GM12878 (cell line): ENCODE measurements at regions of chr13 and their contacts with region 1.

Region 1: GRCh38 chr13:45718063-45718462 is 15.9 kb downstream of the CBY2 start:
- DNase-seq: no peak
- ATAC-seq: peak; percentile 97
- H3K4me3 ChIP-seq: no peak overlapping the region
- H3K27ac ChIP-seq: peak overlapping the region; percentile 6; the same call in 1 of the 2 replicates
- H3K4me1 ChIP-seq: no peaks in the 10 kb centered on the region
- H3K27me3 ChIP-seq: no peaks in the 10 kb centered on the region
- CTCF ChIP-seq: peak; percentile 76 to 81 (median 80)
- EP300 ChIP-seq: no peak
- POLR2A ChIP-seq: no peak
- RAD21 ChIP-seq: peak; percentile 95

Region 2: GRCh38 chr13:44380404-44381165 is 1337.5 kb before region 1 on chr13:
- CTCF ChIA-PET with region 1: no interaction called
- POLR2A ChIA-PET with region 1: no interaction called
- RAD21 ChIA-PET with region 1: no interaction called
- SMC1A ChIA-PET with region 1: no interaction called
- in situ Hi-C with region 1: no loop called
- intact Hi-C with region 1: no loop called
- DNase-seq: no peak
- ATAC-seq: no peak
- H3K4me3 ChIP-seq: no peak overlapping the region
- H3K27ac ChIP-seq: no peak overlapping the region
- H3K4me1 ChIP-seq: no peaks in the 10 kb centered on the region
- H3K27me3 ChIP-seq: peaks cover 0 to under 1% of the 10 kb centered on the region in 2 experiments; a peak in 1 of 4 replicates
- CTCF ChIP-seq: no peak
- EP300 ChIP-seq: no peak
- POLR2A ChIP-seq: no peak
- RAD21 ChIP-seq: no peak

Region 3: DNA sequence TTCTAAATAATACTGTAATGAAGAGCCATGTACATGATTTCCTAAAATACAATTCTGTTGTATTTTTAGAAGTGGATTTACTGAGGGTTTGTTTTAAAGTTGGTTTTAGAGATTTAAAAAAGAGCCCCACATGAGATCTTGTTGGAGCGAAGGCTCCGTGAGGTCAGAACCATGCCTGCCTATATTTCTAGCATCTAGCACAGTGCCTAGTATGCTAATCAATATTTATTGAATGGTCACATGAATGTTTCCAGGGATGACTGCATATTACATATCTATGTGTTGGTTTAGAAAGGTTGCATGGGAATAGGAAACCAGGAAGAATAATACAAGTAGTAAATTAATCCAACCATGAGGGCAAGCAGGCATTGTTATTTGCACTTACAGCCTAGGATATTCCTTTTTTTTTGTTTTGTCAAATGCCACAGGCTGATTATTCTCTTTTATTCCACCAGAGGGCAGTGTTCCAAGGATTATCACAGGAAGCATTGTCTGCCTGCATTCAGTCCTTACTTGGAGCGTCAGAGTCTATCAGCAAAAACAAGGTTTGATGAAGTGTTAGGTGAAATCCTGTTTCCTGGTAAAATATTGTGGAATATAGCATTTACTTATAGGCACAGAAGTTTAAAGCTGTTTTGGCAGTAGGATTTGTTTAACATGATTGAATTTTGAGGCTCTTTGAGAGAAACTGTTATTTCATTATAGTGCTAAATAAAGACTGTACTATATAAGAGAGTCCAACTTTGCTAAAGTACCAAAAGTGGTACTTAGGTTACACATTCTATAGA is 206.6 kb before region 1 on chr13:
- CTCF ChIA-PET with region 1: interaction called, 12 read pairs
- POLR2A ChIA-PET with region 1: no interaction called
- RAD21 ChIA-PET with region 1: interaction called, 3 read pairs
- SMC1A ChIA-PET with region 1: interaction called, 5 read pairs
- in situ Hi-C with region 1: no loop called
- intact Hi-C with region 1: loop called (anchors 2 kb)
- DNase-seq: peak; percentile 24
- ATAC-seq: peak; percentile 85
- H3K4me3 ChIP-seq: no peak overlapping the region
- H3K27ac ChIP-seq: no peak overlapping the region
- H3K4me1 ChIP-seq: no peaks in the 10 kb centered on the region
- H3K27me3 ChIP-seq: no peaks in the 10 kb centered on the region
- CTCF ChIP-seq: peak; percentile 60 to 84 (median 67)
- EP300 ChIP-seq: no peak
- POLR2A ChIP-seq: no peak
- RAD21 ChIP-seq: peak; percentile 58

Region 4: GRCh38 chr13:45683701-45684100 is 34.4 kb before region 1 on chr13:
- CTCF ChIA-PET with region 1: interaction called, 13 read pairs
- POLR2A ChIA-PET with region 1: no interaction called
- RAD21 ChIA-PET with region 1: interaction called, 5 read pairs
- SMC1A ChIA-PET with region 1: interaction called, 11 read pairs
- in situ Hi-C with region 1: no loop called
- intact Hi-C with region 1: no loop called
- DNase-seq: no peak
- ATAC-seq: peak; percentile 63
- H3K4me3 ChIP-seq: no peak overlapping the region
- H3K27ac ChIP-seq: no peak overlapping the region
- H3K4me1 ChIP-seq: no peaks in the 10 kb centered on the region
- H3K27me3 ChIP-seq: no peaks in the 10 kb centered on the region
- CTCF ChIP-seq: peak; percentile 27 to 36 (median 31); a peak in 4 of 6 replicates
- EP300 ChIP-seq: no peak
- POLR2A ChIP-seq: no peak
- RAD21 ChIP-seq: no peak

Region 5: GRCh38 chr13:45695198-45695730 is 22.8 kb before region 1 on chr13:
- CTCF ChIA-PET with region 1: interaction called, 31 read pairs
- POLR2A ChIA-PET with region 1: no interaction called
- RAD21 ChIA-PET with region 1: interaction called, 24 read pairs
- SMC1A ChIA-PET with region 1: interaction called, 34 read pairs
- in situ Hi-C with region 1: no loop called
- intact Hi-C with region 1: no loop called
- DNase-seq: peak; percentile 68
- ATAC-seq: peak; percentile 66
- H3K4me3 ChIP-seq: peak overlapping the region; percentile 66
- H3K27ac ChIP-seq: peak overlapping the region; percentile 98
- H3K4me1 ChIP-seq: peaks cover 14% of the 10 kb centered on the region
- H3K27me3 ChIP-seq: no peaks in the 10 kb centered on the region
- CTCF ChIP-seq: no peak
- EP300 ChIP-seq: peak in 1 of 2 experiments; percentile 57; a peak in 1 of 4 replicates
- POLR2A ChIP-seq: 0 out of 2 replicates have a peak, but pooled peaks have one; percentile 23
- RAD21 ChIP-seq: no peak

Region 6: GRCh38 chr13:45700971-45701900 is 16.8 kb before region 1 on chr13:
- CTCF ChIA-PET with region 1: interaction called, 40 read pairs
- POLR2A ChIA-PET with region 1: interaction called, 3 read pairs
- RAD21 ChIA-PET with region 1: interaction called, 24 read pairs
- SMC1A ChIA-PET with region 1: interaction called, 34 read pairs
- in situ Hi-C with region 1: no loop called
- intact Hi-C with region 1: no loop called
- DNase-seq: peak; percentile 93
- ATAC-seq: peak; percentile 81
- H3K4me3 ChIP-seq: peak overlapping the region; percentile 88
- H3K27ac ChIP-seq: peak overlapping the region; percentile 98
- H3K4me1 ChIP-seq: peaks cover 46% of the 10 kb centered on the region
- H3K27me3 ChIP-seq: no peaks in the 10 kb centered on the region
- CTCF ChIP-seq: peak; percentile 53 to 86 (median 85)
- EP300 ChIP-seq: no peak; a peak in 1 of 4 replicates
- POLR2A ChIP-seq: peak; percentile 82
- RAD21 ChIP-seq: peak; percentile 47

Region 7: DNA sequence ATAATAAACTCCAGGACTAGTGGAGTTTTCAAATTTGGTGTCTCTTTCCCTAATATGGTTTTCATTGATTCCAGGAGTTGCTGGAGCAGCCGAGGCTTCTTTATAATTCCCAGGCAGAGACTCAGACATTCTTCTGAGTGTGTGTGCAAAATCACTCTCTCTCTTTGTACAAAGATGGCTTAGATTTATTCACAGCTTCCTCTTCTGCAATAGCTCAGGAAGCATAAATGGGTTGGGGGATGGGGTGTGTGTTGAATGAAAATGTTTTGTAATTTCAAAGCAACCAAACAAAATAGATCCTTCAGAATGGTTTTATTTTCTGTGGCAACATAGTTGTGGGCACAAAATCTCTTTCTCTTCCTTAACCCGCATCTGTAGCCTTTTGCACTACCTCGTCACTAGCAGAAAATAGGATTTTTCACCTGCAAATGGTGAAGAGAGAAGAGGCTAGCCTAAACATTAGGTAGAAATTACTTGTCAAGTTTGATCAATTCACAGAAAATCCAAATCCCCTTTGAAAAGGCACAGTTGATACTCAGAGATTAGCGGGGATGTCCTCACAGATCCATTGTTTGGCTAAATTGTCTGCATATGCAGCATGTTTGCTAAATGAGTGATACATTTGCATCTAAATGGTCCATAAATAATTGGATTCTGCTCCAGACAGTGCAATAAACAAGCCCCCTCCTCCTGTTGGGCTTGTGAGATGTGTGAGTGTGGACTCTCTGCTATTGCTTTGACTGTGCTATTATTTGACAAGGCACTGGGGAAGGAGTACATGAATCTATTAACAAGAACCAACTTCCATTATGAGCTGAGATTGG is 50.8 kb after region 1 on chr13:
- CTCF ChIA-PET with region 1: no interaction called
- POLR2A ChIA-PET with region 1: no interaction called
- RAD21 ChIA-PET with region 1: no interaction called
- SMC1A ChIA-PET with region 1: no interaction called
- in situ Hi-C with region 1: no loop called
- intact Hi-C with region 1: no loop called
- DNase-seq: no peak
- ATAC-seq: no peak
- H3K4me3 ChIP-seq: no peak overlapping the region
- H3K27ac ChIP-seq: no peak overlapping the region
- H3K4me1 ChIP-seq: no peaks in the 10 kb centered on the region
- H3K27me3 ChIP-seq: peaks cover 0 to 5% of the 10 kb centered on the region in 2 experiments; a peak in 3 of 4 replicates
- CTCF ChIP-seq: no peak
- EP300 ChIP-seq: no peak
- POLR2A ChIP-seq: no peak
- RAD21 ChIP-seq: no peak